Calu3 (cell line): ENCODE measurements at regions of chr2 and their contacts with region 1.

Region 1: GRCh38 chr2:109607766-109608165 is 6.0 kb downstream of the SEPTIN10 start:
- DNase-seq: no peak
- H3K4me3 Mint-ChIP-seq: peak overlapping the region; percentile 42
- H3K27ac Mint-ChIP-seq: peak overlapping the region; percentile 85
- H3K4me1 Mint-ChIP-seq: peaks cover 33% of the 10 kb centered on the region
- H3K27me3 Mint-ChIP-seq: no peaks in the 10 kb centered on the region
- CTCF ChIP-seq: no peak

Region 2: GRCh38 chr2:109466673-109467575 is 140.8 kb before region 1 on chr2:
- CTCF ChIA-PET with region 1: no interaction called
- intact Hi-C with region 1: no loop called
- DNase-seq: no peak
- H3K4me3 Mint-ChIP-seq: no peak overlapping the region
- H3K27ac Mint-ChIP-seq: no peak overlapping the region
- H3K4me1 Mint-ChIP-seq: no peaks in the 10 kb centered on the region
- H3K27me3 Mint-ChIP-seq: peaks cover 92% of the 10 kb centered on the region
- CTCF ChIP-seq: no peak

Region 3: DNA sequence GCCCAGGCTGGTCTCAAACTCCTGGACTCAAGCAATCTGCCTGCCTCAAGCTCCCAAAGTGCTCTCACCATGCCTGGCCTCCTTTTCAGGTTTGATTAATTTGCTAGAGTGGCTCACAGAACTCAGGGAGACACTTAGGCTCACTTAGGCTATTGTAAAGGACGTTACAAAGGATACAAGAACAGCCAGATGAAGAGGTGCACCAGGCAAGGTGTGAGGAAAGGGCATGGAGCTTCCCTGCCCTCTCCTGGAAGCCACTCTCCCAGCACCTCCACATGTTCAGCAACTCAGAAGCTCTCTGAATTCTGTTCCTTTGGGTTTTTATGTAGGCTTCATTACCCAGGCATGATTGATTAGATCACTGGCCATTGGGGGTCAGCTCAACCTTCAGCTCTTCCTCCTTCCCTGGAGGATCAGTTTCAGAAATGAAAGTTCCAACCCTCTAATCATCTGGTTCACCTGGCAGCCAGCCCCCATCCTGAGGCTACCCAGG is 107.6 kb after region 1 on chr2:
- CTCF ChIA-PET with region 1: interaction called, 11 read pairs
- intact Hi-C with region 1: loop called (anchors 5 kb)
- DNase-seq: peak; percentile 45
- H3K4me3 Mint-ChIP-seq: no peak overlapping the region
- H3K27ac Mint-ChIP-seq: no peak overlapping the region
- H3K4me1 Mint-ChIP-seq: no peaks in the 10 kb centered on the region
- H3K27me3 Mint-ChIP-seq: no peaks in the 10 kb centered on the region
- CTCF ChIP-seq: peak; percentile 56

Region 4: GRCh38 chr2:110140401-110140800 is 532.6 kb after region 1 on chr2:
- CTCF ChIA-PET with region 1: no interaction called
- intact Hi-C with region 1: no loop called
- DNase-seq: no peak
- H3K4me3 Mint-ChIP-seq: no peak overlapping the region
- H3K27ac Mint-ChIP-seq: no peak overlapping the region
- H3K4me1 Mint-ChIP-seq: no peaks in the 10 kb centered on the region
- H3K27me3 Mint-ChIP-seq: no peaks in the 10 kb centered on the region
- CTCF ChIP-seq: no peak